ENCODE measurements at regions of chr9 and their contacts with region 1.

Region 1: DNA sequence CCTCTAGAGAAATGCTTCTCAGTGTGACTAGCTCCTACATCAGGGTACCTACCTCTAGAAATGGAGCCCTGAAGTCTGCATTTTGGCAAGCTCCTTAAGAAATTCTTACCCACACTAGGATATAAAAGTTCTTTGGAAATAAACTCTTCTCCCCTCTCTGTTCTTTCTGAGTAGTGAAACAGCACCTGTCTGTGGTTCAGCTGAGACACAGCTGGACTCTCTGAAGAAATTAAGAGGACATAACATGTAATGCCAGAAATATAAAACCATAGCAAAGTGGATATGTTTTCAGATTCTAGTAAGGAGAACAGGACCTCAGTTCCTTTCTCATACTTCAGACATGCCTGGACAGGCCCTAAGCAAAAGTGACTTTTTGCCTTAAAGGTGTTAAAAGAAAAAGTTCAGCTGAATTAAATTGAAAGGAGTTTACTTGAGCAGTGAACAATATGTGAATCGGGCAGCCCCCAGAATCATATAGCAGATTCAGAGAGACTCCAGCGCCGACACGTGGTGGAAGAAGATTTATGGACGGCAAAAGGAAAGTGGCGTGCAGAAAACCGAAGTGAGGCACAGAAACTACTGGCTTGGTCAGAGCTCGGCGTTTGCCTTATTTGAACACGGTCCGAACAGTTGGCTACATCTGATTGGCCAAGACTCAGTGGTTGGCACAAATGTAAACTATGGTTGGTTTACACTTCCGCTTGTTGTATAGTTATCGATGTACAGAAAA is 64.5 kb downstream of the PRKACG start:
- DNase-seq: peak; percentile 39
- H3K4me3 Mint-ChIP-seq: no peak overlapping the region
- H3K27ac Mint-ChIP-seq: no peak overlapping the region
- H3K4me1 Mint-ChIP-seq: peaks cover 36% of the 10 kb centered on the region
- H3K27me3 Mint-ChIP-seq: peaks cover 32% of the 10 kb centered on the region

Region 2: DNA sequence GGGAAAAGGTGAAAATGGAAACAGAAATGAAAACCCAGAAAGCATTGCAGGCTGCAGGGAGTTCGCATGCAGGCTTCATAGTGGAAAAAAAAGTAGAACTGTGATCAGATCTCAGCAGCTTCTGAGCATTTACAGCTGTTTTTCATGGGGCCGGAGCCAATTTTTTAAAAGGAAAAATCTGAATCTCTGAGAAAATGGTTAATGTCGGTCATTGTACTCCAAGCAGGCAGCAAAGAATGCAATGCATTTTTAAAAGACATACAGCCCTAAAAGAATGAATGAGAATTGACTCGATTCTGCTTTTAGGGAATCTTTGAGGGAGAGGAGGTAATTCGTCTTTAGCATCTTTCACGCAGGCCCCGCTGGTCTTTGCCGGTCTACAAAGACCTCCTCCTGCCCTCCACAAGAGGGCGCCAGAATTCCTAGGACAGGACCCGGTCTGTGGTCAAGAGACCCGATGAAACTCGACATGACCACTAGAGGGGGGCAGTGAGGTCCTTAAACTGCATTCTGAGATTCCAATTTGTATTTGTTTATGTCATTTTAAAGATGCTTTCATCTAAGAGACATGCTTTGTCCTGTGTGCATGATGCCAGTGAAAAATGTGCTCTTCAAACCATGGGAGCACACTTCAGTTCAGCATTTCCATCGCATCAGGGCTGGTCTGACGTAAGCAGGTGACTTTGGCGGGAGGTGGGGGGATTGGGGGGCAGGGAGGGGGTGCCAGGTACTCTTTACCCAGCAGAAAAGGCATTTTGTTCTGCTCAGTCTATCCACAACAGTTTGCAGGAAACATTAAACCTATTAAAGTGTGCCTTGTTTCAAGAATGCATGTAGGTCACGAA is 365.0 kb before region 1 on chr9:
- CTCF ChIA-PET with region 1: interaction called, 6 read pairs
- POLR2A ChIA-PET with region 1: no interaction called
- intact Hi-C with region 1: loop called (anchors 1 kb)
- DNase-seq: peak; percentile 87
- H3K4me3 Mint-ChIP-seq: no peak overlapping the region
- H3K27ac Mint-ChIP-seq: no peak overlapping the region
- H3K4me1 Mint-ChIP-seq: no peaks in the 10 kb centered on the region
- H3K27me3 Mint-ChIP-seq: peaks cover 6% of the 10 kb centered on the region

Region 3: GRCh38 chr9:68779558-68780384 is 169.7 kb before region 1 on chr9:
- CTCF ChIA-PET with region 1: no interaction called
- POLR2A ChIA-PET with region 1: no interaction called
- intact Hi-C with region 1: loop called (anchors 1 kb)
- DNase-seq: peak; percentile 95
- H3K4me3 Mint-ChIP-seq: no peak overlapping the region
- H3K27ac Mint-ChIP-seq: no peak overlapping the region
- H3K4me1 Mint-ChIP-seq: peaks cover 5% of the 10 kb centered on the region
- H3K27me3 Mint-ChIP-seq: no peaks in the 10 kb centered on the region

Region 4: GRCh38 chr9:68895741-68896478 is 53.5 kb before region 1 on chr9:
- CTCF ChIA-PET with region 1: interaction called, 4 read pairs
- POLR2A ChIA-PET with region 1: no interaction called
- intact Hi-C with region 1: loop called (anchors 2 kb)
- DNase-seq: no peak
- H3K4me3 Mint-ChIP-seq: peak overlapping the region; percentile 48
- H3K27ac Mint-ChIP-seq: peak overlapping the region; percentile 84
- H3K4me1 Mint-ChIP-seq: peaks cover 31% of the 10 kb centered on the region
- H3K27me3 Mint-ChIP-seq: no peaks in the 10 kb centered on the region

Region 5: DNA sequence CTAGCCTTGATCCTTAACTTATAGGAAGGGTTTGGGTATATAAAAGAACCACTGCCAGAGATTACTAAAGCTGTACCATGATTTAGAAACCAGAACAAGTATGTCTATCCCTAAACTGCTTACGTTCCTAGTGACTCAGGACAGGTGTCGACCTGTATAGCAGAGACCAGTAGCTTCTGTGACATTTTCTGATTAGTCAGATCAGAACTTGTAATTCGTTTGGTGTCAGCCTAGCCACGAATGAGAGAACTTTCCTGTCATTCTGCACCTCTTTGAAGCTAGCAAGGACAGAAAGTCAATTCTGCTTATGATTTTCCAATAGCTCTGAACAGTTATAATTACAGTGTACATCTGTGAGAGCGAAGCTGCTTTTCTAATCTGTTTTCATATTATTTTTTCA is 25.0 kb after region 1 on chr9:
- CTCF ChIA-PET with region 1: interaction called, 7 read pairs
- POLR2A ChIA-PET with region 1: interaction called, 10 read pairs
- intact Hi-C with region 1: loop called (anchors 1 kb)
- DNase-seq: peak; percentile 56
- H3K4me3 Mint-ChIP-seq: no peak overlapping the region
- H3K27ac Mint-ChIP-seq: peak overlapping the region; percentile 85
- H3K4me1 Mint-ChIP-seq: peaks cover 49% of the 10 kb centered on the region
- H3K27me3 Mint-ChIP-seq: peaks cover 3% of the 10 kb centered on the region

Region 6: GRCh38 chr9:68999393-69000105 is 50.1 kb after region 1 on chr9:
- CTCF ChIA-PET with region 1: interaction called, 16 read pairs
- POLR2A ChIA-PET with region 1: no interaction called
- intact Hi-C with region 1: loop called (anchors 2 kb)
- DNase-seq: peak; percentile 73
- H3K4me3 Mint-ChIP-seq: no peak overlapping the region
- H3K27ac Mint-ChIP-seq: no peak overlapping the region
- H3K4me1 Mint-ChIP-seq: peaks cover 9% of the 10 kb centered on the region
- H3K27me3 Mint-ChIP-seq: peaks cover 3% of the 10 kb centered on the region

Region 7: DNA sequence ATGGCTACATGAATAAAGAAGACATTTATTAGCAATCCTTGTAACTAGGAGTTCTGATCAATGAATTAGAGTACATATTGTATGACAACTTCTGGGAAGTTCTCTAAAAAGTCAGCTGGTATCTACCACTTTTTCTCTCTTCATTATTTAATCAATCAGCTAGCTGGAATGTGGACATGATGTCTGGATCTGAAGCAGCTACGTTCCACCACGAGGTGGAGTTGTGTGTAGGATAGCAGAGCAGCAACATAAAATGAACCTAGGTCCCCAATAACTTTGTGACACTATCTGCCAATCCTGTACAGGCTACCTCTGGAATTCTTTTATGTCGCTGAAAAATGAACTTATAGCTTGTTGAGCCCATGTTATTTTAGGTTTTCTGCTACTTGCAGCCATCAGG is 342.6 kb after region 1 on chr9:
- CTCF ChIA-PET with region 1: no interaction called
- POLR2A ChIA-PET with region 1: no interaction called
- intact Hi-C with region 1: no loop called
- DNase-seq: no peak
- H3K4me3 Mint-ChIP-seq: no peak overlapping the region
- H3K27ac Mint-ChIP-seq: no peak overlapping the region
- H3K4me1 Mint-ChIP-seq: no peaks in the 10 kb centered on the region
- H3K27me3 Mint-ChIP-seq: peaks cover 11% of the 10 kb centered on the region

Measured in activated CD4-positive, alpha-beta memory T cell treated with anti-CD3 and anti-CD28 coated beads for 36 hours (primary cell).